ENCODE measurements at regions of chr1 and their contacts with region 1.

Region 1: GRCh38 chr1:168408536-168409242 is 128.0 kb downstream of the TBX19 start:
- DNase-seq: peak; percentile 67
- H3K4me3 Mint-ChIP-seq: peak overlapping the region; percentile 17
- H3K27ac Mint-ChIP-seq: peak overlapping the region; percentile 85
- H3K4me1 Mint-ChIP-seq: peaks cover 42% of the 10 kb centered on the region
- H3K27me3 Mint-ChIP-seq: no peaks in the 10 kb centered on the region

Region 2: DNA sequence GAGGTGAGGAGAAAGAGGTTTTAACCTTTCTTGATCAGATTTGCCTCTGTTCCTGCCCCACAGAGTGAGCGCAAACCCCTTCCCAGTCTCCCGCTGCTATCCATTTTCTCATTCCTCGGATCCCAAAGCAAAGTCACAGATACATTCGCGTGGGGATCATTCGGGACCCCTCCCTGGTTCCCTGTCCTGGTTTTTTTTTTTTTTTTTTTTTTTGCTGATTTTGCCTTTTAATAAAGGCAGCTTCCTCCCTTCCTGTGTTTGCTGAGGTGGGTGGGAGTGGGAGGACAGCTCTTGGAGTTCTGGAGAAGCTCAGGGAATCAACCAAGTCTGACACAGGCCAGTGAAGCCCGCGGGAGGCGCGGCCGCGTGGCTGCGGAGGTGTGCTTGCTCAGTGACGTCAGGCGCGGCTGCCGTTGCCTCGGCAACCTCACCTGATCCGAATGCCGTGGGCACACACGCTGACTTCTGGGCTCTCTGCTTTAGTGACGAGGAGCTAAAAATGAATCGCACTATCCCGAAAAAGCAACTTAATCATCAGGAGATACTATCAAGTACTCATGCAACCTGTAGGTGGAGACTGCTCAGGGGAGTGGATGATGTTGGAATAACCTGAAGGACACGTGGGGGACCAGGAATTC is 21.6 kb before region 1 on chr1:
- CTCF ChIA-PET with region 1: no interaction called
- POLR2A ChIA-PET with region 1: no interaction called
- DNase-seq: peak; percentile 71
- H3K4me3 Mint-ChIP-seq: peak overlapping the region; percentile 33
- H3K27ac Mint-ChIP-seq: no peak overlapping the region
- H3K4me1 Mint-ChIP-seq: peaks cover 20% of the 10 kb centered on the region
- H3K27me3 Mint-ChIP-seq: peaks cover 16% of the 10 kb centered on the region

Region 3: DNA sequence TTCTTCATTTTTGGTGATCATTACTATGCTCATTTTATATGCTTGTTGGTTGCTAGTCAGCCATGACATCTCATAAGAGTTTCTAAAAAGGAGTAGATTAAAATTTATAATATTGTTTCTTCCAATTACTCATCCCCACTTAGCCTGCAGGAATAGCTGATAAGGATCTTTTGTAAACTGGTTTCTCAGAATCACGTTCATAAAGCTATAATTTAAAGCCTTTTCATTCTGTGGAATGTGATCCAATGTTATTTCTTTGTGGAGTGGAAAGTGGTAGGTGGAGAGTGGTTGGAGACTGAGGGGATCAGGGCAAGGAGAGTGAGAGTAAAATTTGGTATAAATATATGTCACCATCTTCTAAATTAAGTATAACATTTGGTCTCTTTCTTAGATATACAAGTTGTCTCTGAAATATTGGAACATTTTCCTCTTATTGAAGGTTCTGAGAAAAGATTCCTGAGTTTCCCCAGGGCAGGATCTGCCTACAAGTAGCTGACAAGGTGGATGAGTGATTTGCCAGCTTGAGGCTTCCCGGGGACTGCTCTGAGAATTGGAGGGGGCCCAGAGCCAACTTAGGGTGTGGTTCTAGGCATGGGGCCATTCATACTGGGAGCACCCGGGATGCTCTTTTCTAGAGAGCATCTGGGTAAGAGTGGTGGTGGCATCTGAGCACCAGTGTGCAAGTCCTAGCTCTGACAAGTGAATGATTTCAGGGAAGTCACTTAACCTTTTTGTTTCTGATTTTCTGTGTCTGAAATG is 11.6 kb before region 1 on chr1:
- CTCF ChIA-PET with region 1: interaction called, 17 read pairs
- POLR2A ChIA-PET with region 1: no interaction called
- DNase-seq: no peak
- H3K4me3 Mint-ChIP-seq: no peak overlapping the region
- H3K27ac Mint-ChIP-seq: no peak overlapping the region
- H3K4me1 Mint-ChIP-seq: peaks cover 18% of the 10 kb centered on the region
- H3K27me3 Mint-ChIP-seq: peaks cover 14% of the 10 kb centered on the region

Measured in activated CD4-positive, alpha-beta T cell treated with anti-CD3 and anti-CD28 coated beads, Interleukin-2, amount 10 ng/mL, durations not matched to agents 7 days and 5 days (primary cell).